OCI-LY7 (cell line): ENCODE measurements at regions of chr1 and their contacts with region 1.

Region 1: DNA sequence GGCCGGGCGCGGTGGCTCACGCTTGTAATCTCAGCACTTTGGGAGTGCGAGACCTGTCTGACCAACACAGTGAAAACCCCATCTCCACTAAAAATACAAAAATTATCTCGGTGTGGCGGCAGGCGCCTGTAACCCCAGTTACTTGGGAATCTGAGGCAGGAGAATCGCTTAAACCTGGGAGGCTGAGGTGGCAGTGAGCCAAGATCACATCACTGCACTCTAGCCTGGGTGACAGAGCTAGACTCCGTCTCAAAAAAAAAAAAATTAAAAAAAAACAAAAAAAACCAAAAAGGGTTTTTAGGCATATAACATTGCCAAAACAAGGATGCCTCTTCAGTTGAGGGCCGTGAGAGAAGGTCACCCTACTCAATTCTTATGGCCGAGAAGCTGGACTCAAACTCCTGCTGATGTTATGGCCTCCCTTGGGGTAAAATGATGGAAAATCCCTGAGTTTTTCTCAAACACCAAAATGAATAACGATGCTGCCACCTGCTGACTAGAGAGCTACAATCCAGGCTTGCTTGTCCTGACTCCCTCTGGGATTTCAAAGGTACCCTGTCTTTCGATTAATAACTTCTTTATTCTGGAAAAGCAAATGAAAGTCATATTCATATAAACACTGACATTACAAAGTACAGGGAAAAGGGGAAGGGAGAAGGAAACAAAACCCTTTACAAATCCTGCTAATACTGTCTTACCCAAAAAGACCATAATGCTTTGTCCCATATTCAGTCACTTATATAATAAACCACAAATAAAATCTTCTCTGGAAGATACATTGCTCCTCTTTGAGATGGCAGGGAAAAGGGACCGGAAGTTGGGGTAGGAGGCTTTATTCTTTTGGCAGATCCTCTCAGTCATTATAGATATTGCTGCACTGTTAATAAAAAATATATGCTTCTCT is 10.7 kb downstream of the RAB42 start:
- DNase-seq: peak; percentile 68
- H3K4me3 ChIP-seq: no peak overlapping the region
- H3K27ac ChIP-seq: no peak overlapping the region
- H3K4me1 ChIP-seq: no peaks in the 10 kb centered on the region
- CTCF ChIP-seq: peak; percentile 95

Region 2: DNA sequence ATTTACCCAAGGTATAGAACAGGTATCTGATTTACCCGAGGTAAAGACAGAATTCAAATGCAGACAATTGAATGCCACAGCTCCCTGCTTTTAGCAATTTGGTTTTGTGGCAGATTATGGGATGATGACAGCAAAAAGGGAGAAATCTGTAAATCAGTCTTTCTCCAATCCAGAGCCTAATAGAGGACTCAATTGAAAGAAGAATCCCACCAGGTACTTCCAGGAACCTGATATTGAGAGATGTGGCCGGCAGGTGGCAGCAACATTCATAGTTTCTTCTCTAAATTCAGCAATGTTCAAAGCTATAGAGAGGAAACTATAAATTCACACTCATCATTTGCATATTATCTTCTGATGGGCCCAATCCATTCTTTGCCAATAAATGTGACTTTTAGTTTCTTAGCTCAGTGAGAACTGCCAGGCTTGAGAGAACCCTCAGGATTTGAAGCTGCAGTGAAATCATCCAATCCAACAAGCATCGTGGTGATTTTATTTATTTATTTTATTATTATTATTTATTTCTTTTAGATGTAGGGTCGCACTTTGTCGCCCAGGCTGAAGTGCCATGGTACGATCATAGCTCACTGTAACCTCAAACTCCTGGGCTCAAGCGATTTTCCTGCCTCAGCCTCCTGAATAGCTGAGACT is 243.1 kb before region 1 on chr1:
- CTCF ChIA-PET with region 1: no interaction called
- POLR2A ChIA-PET with region 1: no interaction called
- intact Hi-C with region 1: loop called (anchors 2 kb)
- DNase-seq: peak; percentile 77
- H3K4me3 ChIP-seq: no peak overlapping the region
- H3K27ac ChIP-seq: no peak overlapping the region
- H3K4me1 ChIP-seq: no peaks in the 10 kb centered on the region
- CTCF ChIP-seq: peak; percentile 92

Region 3: GRCh38 chr1:28409090-28409489 is 193.7 kb before region 1 on chr1:
- CTCF ChIA-PET with region 1: no interaction called
- POLR2A ChIA-PET with region 1: no interaction called
- intact Hi-C with region 1: loop called (anchors 2 kb)
- DNase-seq: no peak
- H3K4me3 ChIP-seq: no peak overlapping the region
- H3K27ac ChIP-seq: no peak overlapping the region
- H3K4me1 ChIP-seq: peaks cover 12% of the 10 kb centered on the region
- CTCF ChIP-seq: no peak